B cell (primary cell): ENCODE measurements at regions of chrX and their contacts with region 1.

Region 1: GRCh38 chrX:135931644-135932487 is 38.4 kb downstream of the SAGE1 start:
- DNase-seq: peak; percentile 38
- ATAC-seq: peak; percentile 36
- H3K4me3 ChIP-seq: no peak overlapping the region
- H3K4me3 Mint-ChIP-seq: no peak overlapping the region
- H3K27ac ChIP-seq: no peak overlapping the region
- H3K27ac Mint-ChIP-seq: no peak overlapping the region
- H3K4me1 ChIP-seq: no peaks in the 10 kb centered on the region
- H3K4me1 Mint-ChIP-seq: no peaks in the 10 kb centered on the region
- H3K27me3 ChIP-seq: no peaks in the 10 kb centered on the region
- H3K27me3 Mint-ChIP-seq: no peaks in the 10 kb centered on the region
- CTCF ChIP-seq: peak; percentile 74

Region 2: GRCh38 chrX:134963041-134963440 is 968.8 kb before region 1 on chrX:
- CTCF ChIA-PET with region 1: no interaction called
- POLR2A ChIA-PET with region 1: no interaction called
- intact Hi-C with region 1: no loop called
- DNase-seq: no peak
- ATAC-seq: no peak
- H3K4me3 ChIP-seq: no peak overlapping the region
- H3K4me3 Mint-ChIP-seq: no peak overlapping the region
- H3K27ac ChIP-seq: no peak overlapping the region
- H3K27ac Mint-ChIP-seq: no peak overlapping the region
- H3K4me1 ChIP-seq: no peaks in the 10 kb centered on the region
- H3K4me1 Mint-ChIP-seq: no peaks in the 10 kb centered on the region
- H3K27me3 ChIP-seq: no peaks in the 10 kb centered on the region
- H3K27me3 Mint-ChIP-seq: peaks cover 16% of the 10 kb centered on the region
- CTCF ChIP-seq: no peak

Region 3: DNA sequence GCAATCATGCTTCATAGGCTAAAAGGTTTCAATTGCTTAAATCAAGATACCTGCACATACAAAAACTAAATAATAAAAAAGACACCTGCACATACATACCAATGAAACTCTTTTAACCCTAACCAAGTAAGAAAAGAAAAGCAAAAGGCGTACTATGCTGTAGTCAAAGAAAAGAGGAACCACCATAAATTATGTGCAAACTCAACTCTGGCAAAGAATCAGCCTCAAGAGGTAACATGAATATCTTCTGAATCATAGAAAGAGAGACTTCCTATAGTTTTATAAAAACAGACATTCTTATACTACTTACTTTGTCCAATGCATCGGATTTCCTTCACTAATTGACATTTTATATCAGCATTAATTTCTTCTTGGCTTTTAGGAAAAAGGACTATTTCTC is 12.6 kb after region 1 on chrX:
- CTCF ChIA-PET with region 1: interaction called, 13 read pairs
- POLR2A ChIA-PET with region 1: no interaction called
- intact Hi-C with region 1: no loop called
- DNase-seq: no peak
- ATAC-seq: no peak
- H3K4me3 ChIP-seq: no peak overlapping the region
- H3K4me3 Mint-ChIP-seq: no peak overlapping the region
- H3K27ac ChIP-seq: no peak overlapping the region
- H3K27ac Mint-ChIP-seq: no peak overlapping the region
- H3K4me1 ChIP-seq: no peaks in the 10 kb centered on the region
- H3K4me1 Mint-ChIP-seq: no peaks in the 10 kb centered on the region
- H3K27me3 ChIP-seq: no peaks in the 10 kb centered on the region
- H3K27me3 Mint-ChIP-seq: no peaks in the 10 kb centered on the region
- CTCF ChIP-seq: no peak